ENCODE measurements at regions of chr2 and their contacts with region 1.

Region 1: GRCh38 chr2:108154371-108155061 is 85.3 kb upstream of the SULT1C3 start:
- DNase-seq: no peak
- ATAC-seq: no peak
- H3K4me3 ChIP-seq: no peak overlapping the region
- H3K4me3 Mint-ChIP-seq: no peak overlapping the region
- H3K27ac ChIP-seq: no peak overlapping the region
- H3K27ac Mint-ChIP-seq: no peak overlapping the region
- H3K4me1 ChIP-seq: no peaks in the 10 kb centered on the region
- H3K4me1 Mint-ChIP-seq: no peaks in the 10 kb centered on the region
- H3K27me3 ChIP-seq: peaks cover 0 to 2% of the 10 kb centered on the region in 2 experiments
- H3K27me3 Mint-ChIP-seq: peaks cover 17% of the 10 kb centered on the region
- CTCF ChIP-seq: no peak

Region 2: DNA sequence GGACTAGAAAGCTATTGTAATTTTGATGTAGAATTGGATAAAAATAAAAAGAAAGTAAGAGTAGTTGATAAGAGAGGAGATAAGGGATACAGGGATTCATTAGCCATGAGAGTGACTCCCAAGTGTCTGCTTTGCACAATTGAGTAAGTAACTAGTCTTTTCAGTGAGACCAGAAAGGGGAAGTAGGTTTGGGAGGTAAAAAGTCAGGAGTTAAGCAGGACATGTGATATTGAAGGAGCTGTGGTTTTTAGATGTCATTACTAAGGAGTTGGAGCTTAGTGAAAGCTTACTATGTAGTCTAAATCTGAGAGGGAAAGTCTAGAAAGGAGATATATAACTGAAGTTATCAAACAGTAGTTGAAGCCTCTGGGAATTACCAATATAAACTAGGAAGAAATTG is 74.8 kb before region 1 on chr2:
- CTCF ChIA-PET with region 1: no interaction called
- POLR2A ChIA-PET with region 1: no interaction called
- intact Hi-C with region 1: no loop called
- DNase-seq: no peak
- ATAC-seq: no peak
- H3K4me3 ChIP-seq: no peak overlapping the region
- H3K4me3 Mint-ChIP-seq: no peak overlapping the region
- H3K27ac ChIP-seq: no peak overlapping the region
- H3K27ac Mint-ChIP-seq: no peak overlapping the region
- H3K4me1 ChIP-seq: no peaks in the 10 kb centered on the region
- H3K4me1 Mint-ChIP-seq: no peaks in the 10 kb centered on the region
- H3K27me3 ChIP-seq: no peaks in the 10 kb centered on the region
- H3K27me3 Mint-ChIP-seq: peaks cover 5% of the 10 kb centered on the region
- CTCF ChIP-seq: no peak

Region 3: GRCh38 chr2:108139521-108139920 is 15.0 kb before region 1 on chr2:
- CTCF ChIA-PET with region 1: interaction called, 3 read pairs
- POLR2A ChIA-PET with region 1: no interaction called
- intact Hi-C with region 1: loop called in 1 of 2 experiments (anchors 2 kb)
- DNase-seq: no peak
- ATAC-seq: no peak
- H3K4me3 ChIP-seq: no peak overlapping the region
- H3K4me3 Mint-ChIP-seq: no peak overlapping the region
- H3K27ac ChIP-seq: no peak overlapping the region
- H3K27ac Mint-ChIP-seq: no peak overlapping the region
- H3K4me1 ChIP-seq: no peaks in the 10 kb centered on the region
- H3K4me1 Mint-ChIP-seq: no peaks in the 10 kb centered on the region
- H3K27me3 ChIP-seq: no peaks in the 10 kb centered on the region
- H3K27me3 Mint-ChIP-seq: peaks cover 3% of the 10 kb centered on the region
- CTCF ChIP-seq: no peak

Measured in CD4-positive, alpha-beta T cell (primary cell).